ENCODE measurements at regions of chr9 and their contacts with region 1.

Region 1: GRCh38 chr9:105621001-105621400 is 41.3 kb upstream of the TAL2 start:
- DNase-seq: no peak
- H3K4me3 ChIP-seq: no peak overlapping the region
- CTCF ChIP-seq: no peak

Region 2: DNA sequence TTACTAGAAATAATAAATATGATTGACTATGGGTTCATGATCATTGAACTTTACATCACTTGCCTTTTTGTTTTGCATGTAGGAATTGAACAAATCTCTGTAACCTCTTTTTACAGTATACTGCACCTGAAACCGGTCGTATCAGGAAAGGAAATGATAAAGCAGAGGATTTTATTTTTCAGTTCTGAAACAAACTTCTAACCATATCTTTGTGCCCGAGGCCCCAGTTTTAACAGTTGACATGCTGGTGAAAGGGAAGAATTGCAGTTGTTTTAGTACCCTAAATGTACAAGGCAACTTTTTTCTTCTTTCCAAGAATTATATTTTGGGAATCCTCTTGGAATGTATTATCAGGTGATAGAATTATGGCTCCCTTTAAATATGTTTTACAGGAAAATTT is 101.1 kb after region 1 on chr9:
- in situ Hi-C with region 1: loop called (anchors 5 kb)
- DNase-seq: no peak
- H3K4me3 ChIP-seq: no peak overlapping the region
- CTCF ChIP-seq: no peak